ENCODE measurements at regions of chrX and their contacts with region 1.

Region 1: DNA sequence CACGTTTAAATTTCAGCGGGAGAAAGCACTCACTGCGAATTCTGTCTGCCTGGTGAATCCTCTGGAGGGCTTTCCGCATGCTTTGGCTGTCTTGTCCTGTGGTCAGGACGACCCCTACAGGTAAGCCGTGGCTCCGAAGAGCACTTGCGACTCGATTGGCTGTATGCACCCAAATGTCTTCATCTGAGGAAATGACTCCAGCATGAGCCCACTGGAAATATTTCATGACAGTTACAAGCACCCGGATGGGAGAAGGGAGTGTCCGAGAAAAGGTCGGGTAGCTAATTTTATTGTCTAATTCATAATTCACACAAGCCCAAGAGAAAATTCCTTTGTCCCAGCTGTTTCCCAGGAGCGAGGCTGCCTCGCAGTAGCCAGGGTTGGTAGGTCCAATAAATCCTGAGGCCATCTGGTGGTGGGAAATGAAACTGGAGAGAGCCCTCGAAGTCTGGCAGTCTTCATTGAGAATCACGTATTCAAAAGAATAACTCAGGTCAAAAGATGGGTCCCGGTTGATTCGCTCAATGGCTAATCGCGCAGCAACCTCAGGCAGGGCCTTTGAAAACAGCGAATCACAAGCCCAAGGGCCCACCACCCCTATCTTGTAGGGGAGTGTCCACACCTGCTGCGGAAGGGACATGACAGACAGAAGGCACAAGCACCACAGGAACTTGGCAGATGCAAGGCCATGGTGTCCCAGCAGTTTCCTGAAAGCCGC is 6.6 kb downstream of the GUCY2F start:
- DNase-seq: no peak

Region 2: DNA sequence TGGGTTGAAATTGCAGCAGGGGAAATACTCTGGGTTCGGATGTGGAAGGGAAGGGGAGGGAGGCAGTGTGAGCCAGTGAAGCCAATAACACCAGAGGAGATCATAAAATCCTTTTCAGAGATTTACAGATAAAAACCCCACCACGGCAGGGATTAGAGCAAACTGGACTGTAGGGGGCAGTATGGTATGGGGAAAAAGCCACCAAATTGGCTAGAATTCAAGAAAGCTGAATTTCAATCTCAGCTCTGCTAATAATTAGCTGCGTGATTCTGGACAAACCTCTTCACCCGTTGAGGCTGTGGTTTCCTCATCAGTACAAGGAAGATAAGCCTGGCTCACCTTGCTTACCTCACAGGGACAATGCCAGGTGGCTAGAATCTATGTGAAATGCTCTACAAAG is 1275.6 kb before region 1 on chrX:
- intact Hi-C with region 1: loop called (anchors 10 kb)
- DNase-seq: no peak

Region 3: GRCh38 chrX:108701633-108702032 is 773.7 kb before region 1 on chrX:
- intact Hi-C with region 1: loop called (anchors 5 kb)
- DNase-seq: no peak